H1 (cell line): ENCODE measurements at regions of chr17 and their contacts with region 1.

Region 1: DNA sequence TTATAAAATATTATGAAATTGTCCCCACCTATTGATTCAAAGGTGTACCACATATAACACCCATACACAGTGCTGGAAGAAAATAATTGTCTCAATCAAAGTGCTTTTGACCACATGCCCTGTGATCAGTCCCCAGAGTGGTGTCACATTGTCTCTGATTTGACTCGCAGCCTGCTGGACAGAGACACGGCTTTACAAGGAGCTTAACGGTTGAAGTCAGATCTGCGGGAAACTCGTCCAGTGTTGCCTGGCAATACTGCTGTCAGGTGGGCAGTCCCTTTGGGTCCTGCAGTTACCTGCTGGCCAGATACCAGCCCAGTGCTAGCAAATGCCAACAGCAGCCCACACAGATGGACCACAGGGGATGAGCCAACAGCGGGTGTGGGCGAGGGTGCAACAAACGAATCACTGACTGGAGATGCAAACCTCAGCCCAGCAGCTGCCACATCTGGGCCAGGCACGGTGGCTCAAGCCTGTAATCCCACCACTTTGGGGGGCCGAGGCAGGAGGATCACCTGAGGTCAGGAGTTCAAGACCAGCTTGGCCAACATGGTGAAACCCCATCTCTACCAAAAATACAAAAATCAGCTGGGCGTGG is 26.2 kb upstream of the SSTR2 start:
- DNase-seq: no peak
- H3K4me3 ChIP-seq: no peak overlapping the region
- H3K27ac ChIP-seq: no peak overlapping the region
- H3K4me1 ChIP-seq: no peaks in the 10 kb centered on the region
- H3K27me3 ChIP-seq: no peaks in the 10 kb centered on the region
- CTCF ChIP-seq: no peak
- EP300 ChIP-seq: no peak
- POLR2A ChIP-seq: no peak
- RAD21 ChIP-seq: no peak

Region 2: GRCh38 chr17:73092523-73093135 is 46.0 kb before region 1 on chr17 and contains the start of gene SLC39A11:
- CTCF ChIA-PET with region 1: no interaction called
- POLR2A ChIA-PET with region 1: no interaction called
- DNase-seq: peak; percentile 80 to 94
- H3K4me3 ChIP-seq: peak within 1 kb of the TSS; percentile 77 to 81 (median 79)
- H3K27ac ChIP-seq: no peak within 1 kb of the TSS
- H3K4me1 ChIP-seq: peaks cover 7 to 9% (median 8%) of the 10 kb centered on the region in 4 experiments
- H3K27me3 ChIP-seq: 0 out of 7 replicates have a peak, but pooled peaks cover 0 to 2% (median 0%) of the 10 kb centered on the region in 4 experiments
- CTCF ChIP-seq: no peak
- EP300 ChIP-seq: no peak
- POLR2A ChIP-seq: no peak; a peak in 1 of 3 replicates
- RAD21 ChIP-seq: peak in 1 of 2 experiments; percentile 0; a peak in 1 of 4 replicates
- total RNA-seq, gene SLC39A11: 19.1 and 19.6 TPM in 2 replicates

Region 3: DNA sequence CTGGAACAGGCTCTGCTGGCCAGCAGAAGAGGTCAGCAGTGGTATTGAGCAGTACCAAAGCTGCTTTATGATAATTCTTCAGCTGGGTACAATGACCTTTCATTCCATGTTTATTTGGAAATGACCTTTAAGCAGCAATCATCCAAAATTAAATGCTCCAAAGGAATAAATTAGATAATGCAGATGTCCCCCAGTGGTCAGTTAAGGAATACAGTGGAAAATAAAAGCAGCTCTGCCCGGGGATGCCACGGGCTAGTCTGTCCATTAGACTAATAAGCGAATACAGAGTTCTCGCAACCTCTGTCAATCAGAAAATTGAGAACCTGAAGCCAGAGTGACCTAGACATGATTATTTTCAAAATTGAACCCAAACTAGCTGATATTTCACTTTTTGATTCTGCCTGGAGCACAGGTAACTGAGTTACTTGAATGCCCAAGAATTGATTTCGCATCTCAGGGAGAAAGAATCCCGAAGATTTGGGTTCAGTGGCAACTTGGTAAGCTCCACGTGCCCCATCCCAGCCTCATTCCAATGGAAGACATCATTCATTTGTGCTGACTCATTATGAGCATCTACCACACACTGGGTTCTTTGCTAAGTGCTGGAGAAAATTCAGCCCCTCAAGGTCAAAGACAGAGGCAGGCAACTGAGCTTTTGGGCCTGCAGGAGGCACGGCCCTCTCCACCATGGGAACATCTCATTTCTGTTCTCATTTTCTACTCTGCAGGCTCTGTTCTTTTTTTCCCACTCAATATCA is 11.7 kb before region 1 on chr17:
- CTCF ChIA-PET with region 1: interaction called, 11 read pairs
- POLR2A ChIA-PET with region 1: interaction called, 3 read pairs
- DNase-seq: no peak
- H3K4me3 ChIP-seq: no peak overlapping the region
- H3K27ac ChIP-seq: no peak overlapping the region
- H3K4me1 ChIP-seq: peaks cover 0 to 4% (median 0%) of the 10 kb centered on the region in 4 experiments; a peak in 2 of 7 replicates
- H3K27me3 ChIP-seq: no peaks in the 10 kb centered on the region
- CTCF ChIP-seq: no peak
- EP300 ChIP-seq: no peak
- POLR2A ChIP-seq: no peak
- RAD21 ChIP-seq: no peak